ENCODE measurements at regions of chr19 and their contacts with region 1.

Region 1: GRCh38 chr19:40813182-40813958 is 14.4 kb downstream of the EGLN2 start:
- DNase-seq: no peak
- ATAC-seq: no peak
- H3K4me3 Mint-ChIP-seq: no peak overlapping the region
- H3K27ac Mint-ChIP-seq: no peak overlapping the region
- H3K4me1 Mint-ChIP-seq: peaks cover 39% of the 10 kb centered on the region
- H3K27me3 Mint-ChIP-seq: peaks cover 21% of the 10 kb centered on the region

Region 2: GRCh38 chr19:40662921-40663694 is 150.3 kb before region 1 on chr19:
- CTCF ChIA-PET with region 1: interaction called, 47 read pairs
- POLR2A ChIA-PET with region 1: no interaction called
- DNase-seq: peak; percentile 92
- ATAC-seq: peak; percentile 96
- H3K4me3 Mint-ChIP-seq: peak overlapping the region; percentile 78
- H3K27ac Mint-ChIP-seq: peak overlapping the region; percentile 81
- H3K4me1 Mint-ChIP-seq: peaks cover 7% of the 10 kb centered on the region
- H3K27me3 Mint-ChIP-seq: peaks cover 6% of the 10 kb centered on the region

Region 3: DNA sequence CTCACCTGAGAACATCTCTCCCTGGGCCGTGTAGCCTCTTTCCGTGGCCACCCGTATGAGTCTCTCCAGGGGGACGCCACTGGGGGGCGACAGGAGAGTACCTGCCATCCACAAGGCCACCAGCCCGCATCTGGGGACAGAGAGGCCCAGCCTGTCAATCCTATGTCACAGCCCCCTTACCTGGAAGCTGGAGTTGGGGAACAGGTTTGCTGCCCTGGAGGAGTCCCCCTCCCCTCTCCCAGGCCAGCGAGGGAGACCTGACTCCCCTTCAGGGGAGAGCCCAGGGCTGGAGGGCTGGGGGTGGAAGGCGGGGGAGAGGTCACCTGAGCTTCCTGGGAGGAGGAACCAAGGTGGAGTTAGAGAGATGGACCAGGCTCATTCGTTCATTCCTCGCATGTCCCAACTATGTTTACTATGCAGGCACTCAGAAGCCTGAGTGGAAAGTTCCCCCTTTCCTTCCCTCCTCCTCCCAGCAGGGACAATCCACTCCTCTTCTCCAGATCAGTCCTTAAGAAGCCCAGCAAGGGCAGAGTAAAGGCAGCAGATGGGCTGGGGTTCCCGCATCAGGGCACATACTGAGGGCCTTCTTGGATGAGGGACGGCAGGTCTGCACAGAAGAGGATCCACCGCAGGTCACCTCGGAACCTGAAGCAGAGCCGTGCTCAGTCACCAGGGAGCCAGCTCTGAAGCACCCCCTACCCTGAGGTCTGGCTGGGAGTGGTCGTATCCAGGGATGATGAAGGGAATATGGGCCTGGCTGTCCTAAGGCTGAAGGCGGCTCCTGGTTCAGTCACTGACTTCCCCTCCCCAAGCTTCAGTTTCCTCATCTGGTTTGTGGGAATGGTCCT is 68.6 kb before region 1 on chr19:
- CTCF ChIA-PET with region 1: interaction called, 18 read pairs
- POLR2A ChIA-PET with region 1: no interaction called
- DNase-seq: peak; percentile 52
- ATAC-seq: peak; percentile 62
- H3K4me3 Mint-ChIP-seq: no peak overlapping the region
- H3K27ac Mint-ChIP-seq: no peak overlapping the region
- H3K4me1 Mint-ChIP-seq: peaks cover 11% of the 10 kb centered on the region
- H3K27me3 Mint-ChIP-seq: no peaks in the 10 kb centered on the region

Region 4: GRCh38 chr19:40791349-40791748 is 22.0 kb before region 1 on chr19:
- CTCF ChIA-PET with region 1: no interaction called
- POLR2A ChIA-PET with region 1: no interaction called
- DNase-seq: no peak
- ATAC-seq: no peak
- H3K4me3 Mint-ChIP-seq: no peak overlapping the region
- H3K27ac Mint-ChIP-seq: no peak overlapping the region
- H3K4me1 Mint-ChIP-seq: peaks cover 14% of the 10 kb centered on the region
- H3K27me3 Mint-ChIP-seq: no peaks in the 10 kb centered on the region